Mammary epithelial cell (primary cell): ENCODE measurements at regions of chr11 and their contacts with region 1.

Region 1: GRCh38 chr11:106585061-106585460 is 433.2 kb downstream of the GUCY1A2 start:
- DNase-seq: peak; percentile 20
- H3K4me3 ChIP-seq: no peak overlapping the region
- H3K27ac ChIP-seq: no peak overlapping the region
- H3K4me1 ChIP-seq: no peaks in the 10 kb centered on the region
- H3K27me3 ChIP-seq: no peaks in the 10 kb centered on the region
- CTCF ChIP-seq: peak; percentile 46 to 68

Region 2: GRCh38 chr11:106087815-106088435 is 497.1 kb before region 1 on chr11:
- CTCF ChIA-PET with region 1: no interaction called
- dilution Hi-C with region 1: no loop called
- in situ Hi-C with region 1: no loop called
- intact Hi-C with region 1: loop called (anchors 1 kb)
- DNase-seq: peak; percentile 37
- H3K4me3 ChIP-seq: no peak overlapping the region
- H3K27ac ChIP-seq: no peak overlapping the region
- H3K4me1 ChIP-seq: no peaks in the 10 kb centered on the region
- H3K27me3 ChIP-seq: no peaks in the 10 kb centered on the region
- CTCF ChIP-seq: peak; percentile 87 to 94

Region 3: GRCh38 chr11:106231591-106231990 is 353.5 kb before region 1 on chr11:
- CTCF ChIA-PET with region 1: no interaction called
- dilution Hi-C with region 1: no loop called
- in situ Hi-C with region 1: no loop called
- intact Hi-C with region 1: loop called (anchors 5 kb)
- DNase-seq: peak; percentile 17
- H3K4me3 ChIP-seq: no peak overlapping the region
- H3K27ac ChIP-seq: no peak overlapping the region
- H3K4me1 ChIP-seq: no peaks in the 10 kb centered on the region
- H3K27me3 ChIP-seq: no peaks in the 10 kb centered on the region
- CTCF ChIP-seq: peak in 1 of 2 donors; percentile 6

Region 4: DNA sequence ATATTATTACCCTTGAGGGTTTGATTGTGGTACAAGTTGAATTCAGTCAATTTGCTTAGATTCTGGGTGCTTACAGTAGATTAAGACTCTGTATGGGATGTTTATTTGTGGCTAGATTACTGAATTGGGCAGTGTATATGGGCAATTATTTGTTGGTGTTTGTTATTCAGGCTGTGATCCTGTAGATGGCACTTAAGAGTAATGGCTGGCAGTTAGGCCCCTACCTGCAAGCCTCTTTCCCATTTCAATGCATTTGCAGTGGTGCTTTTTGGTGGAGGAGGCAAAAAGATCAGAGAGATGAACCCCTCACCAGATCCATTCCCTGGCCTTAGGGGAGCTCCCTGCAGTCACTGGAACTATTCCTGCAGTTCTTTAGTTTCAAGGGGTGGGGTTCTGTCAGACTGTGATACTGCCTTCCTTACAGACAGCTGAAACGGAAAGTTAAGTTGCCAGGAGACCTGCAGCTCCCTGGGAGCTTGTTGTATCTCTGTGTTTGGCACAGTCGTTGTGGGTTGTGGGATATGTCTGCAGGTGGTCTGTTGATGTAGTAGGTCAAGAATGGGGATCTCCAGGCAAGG is 308.1 kb before region 1 on chr11:
- CTCF ChIA-PET with region 1: no interaction called
- dilution Hi-C with region 1: no loop called
- in situ Hi-C with region 1: no loop called
- intact Hi-C with region 1: loop called (anchors 1 kb)
- DNase-seq: no peak
- H3K4me3 ChIP-seq: no peak overlapping the region
- H3K27ac ChIP-seq: no peak overlapping the region
- H3K4me1 ChIP-seq: peaks cover 11% of the 10 kb centered on the region
- H3K27me3 ChIP-seq: no peaks in the 10 kb centered on the region
- CTCF ChIP-seq: peak; percentile 22 to 58

Region 5: GRCh38 chr11:106306942-106307341 is 278.1 kb before region 1 on chr11:
- CTCF ChIA-PET with region 1: no interaction called
- dilution Hi-C with region 1: no loop called
- in situ Hi-C with region 1: loop called (anchors 25 kb)
- intact Hi-C with region 1: no loop called
- DNase-seq: no peak
- H3K4me3 ChIP-seq: no peak overlapping the region
- H3K27ac ChIP-seq: no peak overlapping the region
- H3K4me1 ChIP-seq: no peaks in the 10 kb centered on the region
- H3K27me3 ChIP-seq: no peaks in the 10 kb centered on the region
- CTCF ChIP-seq: peak; percentile 13 to 25

Region 6: GRCh38 chr11:106322111-106322510 is 262.9 kb before region 1 on chr11:
- CTCF ChIA-PET with region 1: no interaction called
- dilution Hi-C with region 1: no loop called
- in situ Hi-C with region 1: loop called (anchors 25 kb)
- intact Hi-C with region 1: loop called (anchors 1 kb)
- DNase-seq: no peak
- H3K4me3 ChIP-seq: no peak overlapping the region
- H3K27ac ChIP-seq: no peak overlapping the region
- H3K4me1 ChIP-seq: no peaks in the 10 kb centered on the region
- H3K27me3 ChIP-seq: no peaks in the 10 kb centered on the region
- CTCF ChIP-seq: no peak

Region 7: GRCh38 chr11:106568632-106569031 is 16.4 kb before region 1 on chr11:
- CTCF ChIA-PET with region 1: no interaction called
- dilution Hi-C with region 1: no loop called
- in situ Hi-C with region 1: no loop called
- intact Hi-C with region 1: no loop called
- DNase-seq: no peak
- H3K4me3 ChIP-seq: no peak overlapping the region
- H3K27ac ChIP-seq: no peak overlapping the region
- H3K4me1 ChIP-seq: no peaks in the 10 kb centered on the region
- H3K27me3 ChIP-seq: no peaks in the 10 kb centered on the region
- CTCF ChIP-seq: no peak

Region 8: GRCh38 chr11:107116358-107116757 is 531.3 kb after region 1 on chr11:
- CTCF ChIA-PET with region 1: no interaction called
- dilution Hi-C with region 1: no loop called
- in situ Hi-C with region 1: no loop called
- intact Hi-C with region 1: no loop called
- DNase-seq: no peak
- H3K4me3 ChIP-seq: no peak overlapping the region
- H3K27ac ChIP-seq: no peak overlapping the region
- H3K4me1 ChIP-seq: no peaks in the 10 kb centered on the region
- H3K27me3 ChIP-seq: peaks cover 3% of the 10 kb centered on the region
- CTCF ChIP-seq: no peak